ENCODE measurements at regions of chr3 and their contacts with region 1.

Region 1: GRCh38 chr3:150681057-150681456 is 22.7 kb downstream of the ERICH6 start:
- DNase-seq: no peak
- H3K4me3 Mint-ChIP-seq: no peak overlapping the region
- H3K27ac Mint-ChIP-seq: no peak overlapping the region
- H3K4me1 Mint-ChIP-seq: peaks cover 22% of the 10 kb centered on the region
- H3K27me3 Mint-ChIP-seq: no peaks in the 10 kb centered on the region

Region 2: GRCh38 chr3:150610790-150611189 is 70.3 kb before region 1 on chr3:
- CTCF ChIA-PET with region 1: no interaction called
- POLR2A ChIA-PET with region 1: no interaction called
- intact Hi-C with region 1: loop called (anchors 5 kb)
- DNase-seq: no peak
- H3K4me3 Mint-ChIP-seq: no peak overlapping the region
- H3K27ac Mint-ChIP-seq: no peak overlapping the region
- H3K4me1 Mint-ChIP-seq: peaks cover 79% of the 10 kb centered on the region
- H3K27me3 Mint-ChIP-seq: no peaks in the 10 kb centered on the region